Heart left ventricle (tissue), 16 donors: ENCODE measurements at regions of chr19 and their contacts with region 1.

Region 1: DNA sequence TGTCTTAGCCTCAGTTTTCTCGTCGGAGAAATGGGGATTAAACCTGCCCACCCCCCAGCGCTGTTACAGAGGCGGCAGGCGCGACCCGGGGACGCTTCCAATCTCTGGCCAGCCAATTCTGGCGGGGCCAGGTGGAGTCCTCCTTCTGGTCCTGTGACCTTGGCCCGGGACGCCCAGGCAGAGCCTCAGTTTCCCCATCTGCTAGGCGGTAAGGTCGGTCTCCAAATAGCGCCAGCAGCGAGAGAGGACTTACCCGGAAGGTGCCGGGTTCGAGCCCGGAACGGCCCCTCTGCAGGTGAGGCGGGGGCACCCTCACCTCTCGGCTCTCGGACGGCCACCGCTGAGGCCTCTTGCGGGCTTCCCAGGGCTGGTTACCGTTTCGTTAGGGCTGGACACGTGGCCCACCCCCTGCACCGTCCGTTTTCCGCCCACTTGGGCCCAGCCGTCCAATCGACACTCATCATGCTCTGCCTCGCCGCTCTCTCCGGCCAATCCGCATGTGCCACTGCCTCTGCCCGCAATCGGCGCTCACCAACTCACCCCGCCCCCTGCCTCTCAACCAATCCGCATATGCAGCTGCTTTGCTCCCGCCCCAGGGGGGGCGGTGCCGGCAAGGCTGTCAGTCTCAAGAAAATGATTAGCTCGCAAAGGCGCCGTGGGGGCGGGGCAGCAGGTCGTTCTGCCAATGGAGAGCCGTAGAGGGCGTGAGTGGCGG is at the start of gene ISOC2:
- DNase-seq: peak; percentile 100
- ATAC-seq: peak; percentile 94 to 96 (median 96)
- H3K4me3 ChIP-seq: peak within 1 kb of the TSS; percentile 47 to 94 (median 82)
- H3K27ac ChIP-seq: peak within 1 kb of the TSS; percentile 63 to 97 (median 92)
- H3K4me1 ChIP-seq: peaks cover 0 to 24% (median 9%) of the 10 kb centered on the region in 12 donors
- H3K27me3 ChIP-seq: no peaks in the 10 kb centered on the region
- CTCF ChIP-seq: no peak
- POLR2A ChIP-seq: peak in 1 of 2 donors; percentile 27
- total RNA-seq, gene ISOC2: 36.9 to 102 (median 48.8) TPM

Region 2: GRCh38 chr19:55053735-55054134 is 407.7 kb before region 1 on chr19:
- intact Hi-C with region 1: no loop called
- DNase-seq: no peak
- ATAC-seq: peak in 1 of 4 donors; percentile 19
- H3K4me3 ChIP-seq: no peak overlapping the region
- H3K27ac ChIP-seq: no peak overlapping the region
- H3K4me1 ChIP-seq: no peaks in the 10 kb centered on the region
- H3K27me3 ChIP-seq: no peaks in the 10 kb centered on the region
- CTCF ChIP-seq: no peak
- POLR2A ChIP-seq: no peak

Region 3: DNA sequence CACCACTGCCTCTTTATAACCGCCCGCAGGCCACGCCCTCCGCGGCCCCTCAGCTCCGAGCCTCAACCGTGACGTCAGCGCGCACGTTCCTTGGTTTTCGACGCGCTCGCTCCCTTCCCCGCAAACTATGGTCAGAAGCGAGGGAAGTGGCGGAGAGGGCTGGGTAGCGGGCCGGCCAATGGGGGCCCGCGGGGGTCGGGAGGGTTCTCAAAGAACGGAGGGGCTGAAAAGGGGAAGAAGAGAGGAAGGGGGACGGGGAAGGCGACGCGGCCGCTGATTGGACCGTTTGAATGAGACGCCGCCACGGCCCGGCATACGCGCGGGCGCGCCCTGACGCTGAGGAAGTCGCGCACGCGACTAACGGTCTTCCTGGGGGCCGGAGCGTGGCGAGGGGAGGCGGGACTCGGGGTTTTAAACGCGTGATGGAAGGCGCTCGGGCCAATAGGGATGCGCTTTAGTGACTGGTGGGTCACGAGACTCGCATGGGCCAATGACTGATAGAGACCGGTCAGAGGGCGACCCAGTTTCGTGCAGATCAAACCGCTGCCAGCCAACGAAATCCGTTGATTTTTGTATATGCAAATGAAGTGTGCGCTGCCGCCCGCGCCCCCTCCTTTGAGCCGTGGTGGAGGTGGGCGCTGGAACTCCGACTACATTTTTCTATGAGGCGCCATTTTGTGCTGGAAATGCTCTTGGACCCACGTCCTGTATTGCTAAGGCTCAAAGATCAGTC is 53.5 kb before region 1 on chr19:
- intact Hi-C with region 1: loop called in 1 of 10 experiments (anchors 2 kb)
- DNase-seq: peak; percentile 99 to 100 (median 99)
- ATAC-seq: peak; percentile 97 to 98 (median 97)
- H3K4me3 ChIP-seq: peak overlapping the region; percentile 74 to 99 (median 90)
- H3K27ac ChIP-seq: peak overlapping the region; percentile 84 to 99 (median 97)
- H3K4me1 ChIP-seq: peaks cover 3 to 24% (median 12%) of the 10 kb centered on the region in 12 donors
- H3K27me3 ChIP-seq: no peaks in the 10 kb centered on the region
- CTCF ChIP-seq: no peak
- POLR2A ChIP-seq: peak in 1 of 2 donors; percentile 70

Region 4: DNA sequence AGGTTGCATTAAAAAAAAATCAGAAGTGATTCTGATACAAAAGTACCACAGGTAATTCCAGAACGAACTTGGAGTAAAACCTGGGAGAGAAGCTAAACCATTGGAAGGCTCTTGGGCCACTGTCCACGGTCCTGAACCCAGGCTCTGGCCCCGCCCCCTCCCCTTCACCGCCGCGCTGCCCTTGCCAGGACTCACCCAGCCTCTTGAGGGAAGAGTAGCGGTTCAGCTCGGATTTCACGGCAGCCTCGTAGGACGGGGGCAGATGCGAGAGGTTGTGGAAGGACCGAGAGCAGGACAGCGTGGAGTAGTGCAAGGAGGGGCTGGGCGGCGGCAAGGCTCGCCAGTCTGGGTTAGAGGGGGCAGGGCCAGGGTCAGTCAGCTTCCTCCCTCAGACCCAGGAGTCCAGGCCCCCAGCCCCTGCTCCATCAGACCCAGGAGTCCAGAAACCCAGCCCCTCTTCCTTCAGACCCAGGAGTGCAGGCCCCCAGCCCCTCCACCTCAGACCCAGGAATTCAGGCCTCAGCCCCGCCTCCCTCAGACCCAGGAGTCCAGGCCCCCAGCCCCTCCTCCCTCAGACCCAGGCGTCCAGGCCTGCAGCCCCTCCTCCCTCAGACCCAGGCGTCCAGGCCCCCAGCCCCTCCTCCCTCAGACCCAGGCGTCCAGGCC is 23.9 kb before region 1 on chr19:
- intact Hi-C with region 1: no loop called
- DNase-seq: peak in 3 of 5 donors; percentile 51 to 64 (median 57)
- ATAC-seq: peak; percentile 56 to 88 (median 82)
- H3K4me3 ChIP-seq: no peak overlapping the region
- H3K27ac ChIP-seq: no peak overlapping the region
- H3K4me1 ChIP-seq: peaks cover 0 to 27% (median 0%) of the 10 kb centered on the region in 12 donors
- H3K27me3 ChIP-seq: peaks cover 45 to 74% (median 64%) of the 10 kb centered on the region in 9 donors
- CTCF ChIP-seq: no peak
- POLR2A ChIP-seq: no peak

Region 5: DNA sequence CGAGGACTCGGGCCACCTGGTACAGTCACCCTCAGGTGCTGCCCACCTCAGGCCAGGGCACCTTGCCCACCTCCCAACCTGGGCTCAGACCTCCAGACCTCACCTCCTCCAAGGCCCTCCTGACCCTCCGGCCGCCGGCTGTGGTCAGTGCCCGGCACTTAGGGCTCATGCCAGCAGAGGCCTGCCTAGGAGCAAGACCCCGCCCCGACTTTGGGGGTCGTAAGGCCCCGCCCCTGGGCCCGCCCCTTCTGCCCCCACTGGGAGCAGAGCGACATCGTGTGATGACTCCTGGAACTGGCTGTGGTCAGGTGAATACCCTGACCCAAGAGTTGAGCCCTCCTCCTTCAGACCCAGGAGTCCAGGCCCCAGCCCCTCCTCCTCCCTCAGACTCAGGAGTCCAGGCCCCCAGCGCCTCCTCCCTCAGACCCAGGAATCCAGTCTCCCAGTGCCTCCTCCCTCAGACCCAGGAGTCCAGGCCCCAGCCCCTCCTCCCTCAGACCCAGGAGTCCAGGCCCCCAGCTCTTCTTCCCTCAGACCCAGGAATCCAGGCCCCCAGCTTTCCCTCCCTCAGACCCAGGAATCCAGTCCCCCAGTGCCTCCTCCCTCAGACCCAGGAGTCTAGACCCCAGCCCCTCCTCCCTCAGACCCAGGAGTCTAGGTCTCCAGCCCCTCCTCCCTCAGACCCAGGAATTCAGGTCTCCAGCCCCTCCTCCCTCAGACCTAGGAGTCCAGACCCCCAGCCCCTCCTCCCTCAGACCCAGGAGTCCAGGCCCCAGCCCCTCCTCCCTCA is 75.7 kb after region 1 on chr19 and contains the start of gene SBK2:
- intact Hi-C with region 1: no loop called
- DNase-seq: no peak
- ATAC-seq: peak in 2 of 4 donors; percentile 23 to 29
- H3K4me3 ChIP-seq: peak within 1 kb of the TSS in 1 of 12 donors; percentile 34
- H3K27ac ChIP-seq: no peak within 1 kb of the TSS
- H3K4me1 ChIP-seq: peaks cover 0 to 8% (median 0%) of the 10 kb centered on the region in 12 donors
- H3K27me3 ChIP-seq: no peaks in the 10 kb centered on the region
- CTCF ChIP-seq: peak in 4 of 12 donors; percentile 13 to 26 (median 16)
- POLR2A ChIP-seq: no peak
- total RNA-seq, gene SBK2: 0.68 to 2.6 (median 2.1) TPM

Region 6: DNA sequence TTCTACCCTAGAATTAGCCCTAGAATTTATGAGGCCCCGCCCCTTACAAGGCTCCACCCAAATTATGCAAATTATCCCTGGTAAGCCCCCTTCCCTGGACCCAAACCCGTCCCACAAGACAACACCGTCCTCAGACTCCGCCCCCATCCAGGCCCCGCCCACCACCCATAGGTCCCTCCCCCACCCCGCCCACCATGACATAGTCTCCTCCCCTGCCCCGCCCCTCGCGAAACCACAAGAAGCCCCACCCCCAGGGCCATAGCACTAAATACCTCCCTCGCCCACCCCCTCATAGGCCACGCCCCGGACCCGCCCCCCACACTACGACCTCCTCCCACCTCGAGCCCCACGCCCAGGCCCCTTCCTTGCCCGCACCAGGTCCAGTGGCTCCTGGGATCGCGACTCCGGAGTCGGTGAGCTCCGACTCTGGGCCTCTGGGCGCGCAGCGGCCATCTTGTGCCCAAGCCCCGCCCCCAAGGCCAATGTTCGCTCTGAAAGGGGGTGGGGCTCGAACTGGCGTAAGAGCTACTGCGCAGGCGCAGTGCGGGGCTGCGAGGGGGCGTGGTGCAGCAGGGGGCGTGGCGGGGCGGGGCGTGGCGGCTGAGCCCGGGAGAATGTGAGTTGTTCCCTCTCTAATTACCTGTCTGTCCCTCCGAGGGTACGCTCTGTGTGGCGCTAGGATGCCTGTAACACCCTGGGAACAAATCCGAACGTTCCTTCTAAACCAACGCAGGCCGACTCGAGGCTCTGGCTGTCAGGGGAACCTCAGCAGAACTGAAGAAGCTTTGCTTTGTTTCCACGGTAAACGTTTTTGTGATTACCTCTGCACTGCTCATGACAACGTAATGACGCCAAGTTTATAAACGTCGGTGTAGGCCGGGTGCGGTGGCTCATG is 162.9 kb after region 1 on chr19 and contains the start of gene ZNF784:
- intact Hi-C with region 1: loop called in 1 of 10 experiments (anchors 5 kb)
- DNase-seq: peak; percentile 92 to 98 (median 94)
- ATAC-seq: peak; percentile 87 to 97 (median 92)
- H3K4me3 ChIP-seq: peak within 1 kb of the TSS; percentile 7 to 73 (median 63)
- H3K27ac ChIP-seq: peak within 1 kb of the TSS; percentile 78 to 96 (median 92)
- H3K4me1 ChIP-seq: peaks cover 0 to 45% (median 11%) of the 10 kb centered on the region in 12 donors
- H3K27me3 ChIP-seq: no peaks in the 10 kb centered on the region
- CTCF ChIP-seq: no peak
- POLR2A ChIP-seq: peak in 1 of 2 donors; percentile 42
- total RNA-seq, gene ZNF784: 6.7 to 15.8 (median 9.2) TPM